Left ventricle myocardium inferior (tissue), 1 donor: ENCODE measurements at regions of chrX and their contacts with region 1.

Region 1: DNA sequence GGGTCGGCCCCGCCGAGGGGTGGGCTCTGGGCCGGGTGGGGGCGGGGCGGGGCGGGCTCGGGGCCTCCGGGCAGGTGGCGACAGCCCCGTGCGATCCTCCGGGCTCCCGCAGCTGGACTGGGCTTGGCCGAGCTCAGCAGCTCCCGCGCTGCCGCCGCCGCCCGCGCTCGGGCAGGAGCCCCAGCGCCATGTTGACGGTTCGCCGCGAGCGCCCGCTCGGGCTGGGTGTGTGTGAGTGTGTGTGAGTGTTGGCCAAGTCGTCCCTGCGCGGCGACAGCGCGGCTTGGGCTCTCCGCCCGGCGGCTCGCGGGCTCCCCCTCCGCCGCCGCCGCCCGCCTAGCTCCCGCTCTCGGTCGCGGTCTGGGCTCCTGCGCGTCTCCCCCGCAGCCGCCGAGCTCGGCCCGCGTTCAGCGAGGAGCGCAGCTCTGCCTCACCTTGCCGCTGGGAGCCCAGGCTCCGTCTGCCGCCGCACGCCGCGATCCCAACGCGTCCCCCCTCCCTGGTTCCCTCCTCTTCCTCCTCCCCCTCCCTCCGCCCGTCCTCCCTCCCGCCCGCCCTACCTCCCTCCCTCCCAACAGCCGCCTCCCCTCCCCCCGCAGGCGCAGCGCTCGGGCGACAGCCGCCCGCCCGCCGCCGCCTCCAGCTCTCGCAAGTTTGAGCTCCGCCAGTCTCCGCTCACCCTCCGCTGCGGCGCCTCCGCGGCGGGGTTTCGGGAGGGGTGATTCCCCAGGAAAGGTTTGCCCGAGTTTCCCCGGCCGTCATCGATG is at the start of gene BCOR:
- DNase-seq: peak; percentile 73
- H3K4me3 ChIP-seq: peak within 1 kb of the TSS; percentile 86
- H3K27ac ChIP-seq: peak within 1 kb of the TSS; percentile 93
- H3K4me1 ChIP-seq: peaks cover 24% of the 10 kb centered on the region
- H3K27me3 ChIP-seq: no peaks in the 10 kb centered on the region
- CTCF ChIP-seq: peak; percentile 19
- total RNA-seq, gene BCOR: 15.1 TPM

Region 2: GRCh38 chrX:39559229-39559628 is 538.5 kb before region 1 on chrX:
- intact Hi-C with region 1: no loop called
- DNase-seq: no peak
- H3K4me3 ChIP-seq: no peak overlapping the region
- H3K27ac ChIP-seq: no peak overlapping the region
- H3K4me1 ChIP-seq: no peaks in the 10 kb centered on the region
- H3K27me3 ChIP-seq: no peaks in the 10 kb centered on the region
- CTCF ChIP-seq: no peak

Region 3: DNA sequence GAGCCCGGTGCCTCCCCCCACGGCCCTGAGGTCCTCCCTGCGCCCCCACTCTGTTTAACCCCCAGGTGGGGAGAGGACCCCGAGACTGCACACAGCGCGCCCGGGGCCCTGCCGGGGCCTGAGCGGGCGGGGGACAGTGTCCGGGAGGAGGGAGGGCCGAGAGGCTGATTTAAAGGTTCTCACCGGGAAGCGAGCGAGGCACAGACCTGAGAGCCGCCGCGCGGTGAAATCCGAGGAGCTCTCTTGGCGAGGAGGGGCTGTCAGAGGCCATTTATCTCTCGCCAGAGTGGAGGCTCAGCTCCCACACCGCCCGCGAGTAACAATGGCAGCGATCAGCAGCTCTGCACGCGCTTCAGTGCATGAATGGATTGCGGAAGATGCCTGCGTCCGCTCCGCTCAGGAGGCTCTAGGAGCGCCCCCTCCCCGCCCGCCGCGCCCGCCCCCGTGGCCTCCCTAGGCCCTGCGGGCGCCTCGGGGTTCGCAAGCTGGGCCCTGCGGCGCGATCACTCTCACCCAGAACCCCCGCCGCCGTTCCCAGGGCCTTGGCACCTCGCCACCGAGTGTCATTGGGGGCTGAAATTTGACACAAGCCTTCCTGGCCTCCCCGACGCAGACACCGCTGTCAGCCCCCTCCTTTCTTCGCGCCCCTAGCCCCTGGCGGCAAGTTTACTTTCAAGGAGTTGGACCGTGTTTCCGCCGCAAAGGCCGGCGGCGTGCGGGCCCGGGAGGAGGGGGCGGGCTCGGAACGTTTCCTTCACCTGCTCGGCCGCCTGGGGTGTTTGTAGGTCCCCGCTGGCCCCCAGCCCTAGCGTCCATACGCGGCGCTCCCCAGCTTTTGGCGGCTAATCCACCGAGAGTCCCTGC is 48.8 kb after region 1 on chrX:
- intact Hi-C with region 1: loop called (anchors 10 kb)
- DNase-seq: no peak
- H3K4me3 ChIP-seq: peak overlapping the region; percentile 69
- H3K27ac ChIP-seq: peak overlapping the region; percentile 73
- H3K4me1 ChIP-seq: peaks cover 58% of the 10 kb centered on the region
- H3K27me3 ChIP-seq: no peaks in the 10 kb centered on the region
- CTCF ChIP-seq: no peak